PC-9 (cell line): ENCODE measurements at regions of chr10 and their contacts with region 1.

Region 1: GRCh38 chr10:101214446-101215396 is 14.5 kb downstream of the LBX1 start:
- DNase-seq: peak in 1 of 2 experiments; percentile 49
- H3K4me3 ChIP-seq: peak overlapping the region; percentile 53; the same call in 1 of the 2 replicates
- H3K27ac ChIP-seq: no peak overlapping the region
- H3K4me1 ChIP-seq: 0 out of 2 replicates have a peak, but pooled peaks cover 4% of the 10 kb centered on the region
- H3K27me3 ChIP-seq: peaks cover 41% of the 10 kb centered on the region
- CTCF ChIP-seq: peak; percentile 84

Region 2: GRCh38 chr10:101095542-101096213 is 119.0 kb before region 1 on chr10:
- CTCF ChIA-PET with region 1: no interaction called
- POLR2A ChIA-PET with region 1: no interaction called
- intact Hi-C with region 1: no loop called
- DNase-seq: peak; percentile 55 to 68
- H3K4me3 ChIP-seq: no peak overlapping the region
- H3K27ac ChIP-seq: no peak overlapping the region
- H3K4me1 ChIP-seq: no peaks in the 10 kb centered on the region
- H3K27me3 ChIP-seq: peaks cover 38% of the 10 kb centered on the region
- CTCF ChIP-seq: peak; percentile 79

Region 3: DNA sequence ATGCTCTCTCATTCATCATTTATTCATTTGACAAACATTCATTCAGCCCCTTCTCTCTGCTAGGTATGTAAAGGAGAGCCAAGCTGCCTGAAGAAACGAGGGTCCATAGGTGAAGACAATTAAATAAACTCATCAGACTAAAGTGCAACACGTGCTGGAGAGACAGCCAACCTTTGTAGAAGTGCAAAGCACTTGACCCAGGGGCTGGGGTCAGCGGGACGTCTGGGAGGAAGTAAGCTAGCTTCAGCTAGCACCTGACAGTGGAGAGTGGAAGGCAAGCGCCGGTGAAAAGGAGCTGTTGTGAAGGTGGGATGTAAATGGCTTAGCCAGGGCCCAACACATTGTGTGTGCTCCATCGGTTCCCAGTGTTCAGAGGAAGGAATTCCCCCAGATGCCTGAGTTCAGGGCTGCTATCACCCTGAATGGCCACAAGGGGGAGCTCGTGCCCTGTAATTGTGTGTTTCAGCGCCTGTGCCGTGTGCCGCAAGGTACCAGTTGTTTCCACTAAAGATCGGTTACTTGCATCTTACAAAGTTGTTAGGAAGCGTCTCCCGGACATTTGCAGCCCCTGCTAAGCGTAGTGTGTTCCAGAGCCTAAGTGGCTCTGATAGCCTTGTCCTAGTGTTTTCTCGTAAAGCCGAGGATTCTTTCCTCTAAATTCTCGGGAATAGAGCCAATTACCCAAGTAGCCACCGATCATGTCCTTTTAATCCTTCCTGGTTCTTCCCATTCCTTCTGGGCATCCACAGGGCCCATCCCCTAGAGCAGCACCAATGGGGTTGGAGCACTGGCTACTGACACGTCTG is 53.0 kb before region 1 on chr10:
- CTCF ChIA-PET with region 1: no interaction called
- POLR2A ChIA-PET with region 1: no interaction called
- intact Hi-C with region 1: loop called (anchors 2 kb)
- DNase-seq: peak; percentile 44 to 48
- H3K4me3 ChIP-seq: no peak overlapping the region
- H3K27ac ChIP-seq: no peak overlapping the region
- H3K4me1 ChIP-seq: no peaks in the 10 kb centered on the region
- H3K27me3 ChIP-seq: peaks cover 27% of the 10 kb centered on the region
- CTCF ChIP-seq: peak; percentile 88

Region 4: DNA sequence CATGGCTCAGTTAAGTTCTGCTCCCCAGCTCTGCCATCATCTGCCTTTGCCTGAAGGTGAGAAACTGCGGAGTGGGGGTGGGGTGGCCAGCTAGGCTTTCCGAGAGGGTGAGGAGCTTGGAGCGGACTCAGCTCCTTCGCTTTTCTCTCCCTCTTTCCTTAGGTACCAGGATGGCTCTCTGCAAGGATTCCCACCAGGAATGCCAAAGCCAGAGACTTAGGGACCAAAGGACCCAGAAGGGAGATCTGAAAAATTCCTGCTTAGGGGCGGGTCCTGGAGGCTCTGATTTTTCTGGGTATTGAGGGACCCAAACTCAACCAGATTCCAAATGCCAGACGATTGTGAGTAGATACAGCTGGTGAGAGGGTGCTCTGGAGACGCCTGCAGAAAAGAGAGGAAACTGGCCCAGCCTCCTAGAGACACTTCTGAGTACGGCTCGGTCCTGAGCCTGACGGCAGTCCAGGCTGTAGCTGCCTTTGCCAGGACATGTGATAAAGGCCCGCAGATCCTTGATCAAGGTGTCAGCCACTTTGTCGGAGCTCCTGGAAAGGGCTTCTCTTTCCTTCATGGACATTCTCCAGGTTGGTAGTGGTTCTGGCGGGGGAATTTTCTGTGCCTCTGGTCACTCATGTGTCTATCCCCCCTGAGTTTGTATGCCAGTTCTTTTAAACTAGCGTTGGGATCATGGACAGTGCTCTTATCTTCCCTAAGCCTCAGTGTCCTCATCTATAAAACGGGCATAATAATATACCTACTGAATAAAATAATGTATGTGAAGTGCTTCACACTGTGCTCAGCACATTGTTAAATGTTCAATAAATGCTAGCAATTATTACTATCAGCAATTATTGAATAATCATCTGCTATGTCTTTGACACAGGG is 96.7 kb after region 1 on chr10:
- CTCF ChIA-PET with region 1: no interaction called
- POLR2A ChIA-PET with region 1: no interaction called
- intact Hi-C with region 1: no loop called
- DNase-seq: no peak
- H3K4me3 ChIP-seq: no peak overlapping the region
- H3K27ac ChIP-seq: no peak overlapping the region
- H3K4me1 ChIP-seq: no peaks in the 10 kb centered on the region
- H3K27me3 ChIP-seq: peaks cover 28% of the 10 kb centered on the region
- CTCF ChIP-seq: no peak

Region 5: GRCh38 chr10:101441541-101442455 is 227.1 kb after region 1 on chr10:
- CTCF ChIA-PET with region 1: interaction called, 5 read pairs
- POLR2A ChIA-PET with region 1: no interaction called
- intact Hi-C with region 1: loop called (anchors 2 kb)
- DNase-seq: peak; percentile 7 to 36
- H3K4me3 ChIP-seq: no peak overlapping the region
- H3K27ac ChIP-seq: no peak overlapping the region
- H3K4me1 ChIP-seq: no peaks in the 10 kb centered on the region
- H3K27me3 ChIP-seq: no peaks in the 10 kb centered on the region
- CTCF ChIP-seq: peak; percentile 68

Region 6: GRCh38 chr10:101774589-101775272 is 560.0 kb after region 1 on chr10:
- CTCF ChIA-PET with region 1: no interaction called
- POLR2A ChIA-PET with region 1: no interaction called
- intact Hi-C with region 1: loop called (anchors 2 kb)
- DNase-seq: no peak
- H3K4me3 ChIP-seq: no peak overlapping the region
- H3K27ac ChIP-seq: no peak overlapping the region
- H3K4me1 ChIP-seq: no peaks in the 10 kb centered on the region
- H3K27me3 ChIP-seq: no peaks in the 10 kb centered on the region
- CTCF ChIP-seq: no peak

Region 7: GRCh38 chr10:102009801-102010425 is 795.2 kb after region 1 on chr10:
- CTCF ChIA-PET with region 1: no interaction called
- POLR2A ChIA-PET with region 1: no interaction called
- intact Hi-C with region 1: loop called (anchors 2 kb)
- DNase-seq: peak; percentile 40 to 76
- H3K4me3 ChIP-seq: no peak overlapping the region
- H3K27ac ChIP-seq: no peak overlapping the region
- H3K4me1 ChIP-seq: peaks cover 4% of the 10 kb centered on the region; the same call in 1 of the 2 replicates
- H3K27me3 ChIP-seq: no peaks in the 10 kb centered on the region
- CTCF ChIP-seq: peak; percentile 83